Naive thymus-derived CD8-positive, alpha-beta T cell (primary cell): ENCODE measurements at regions of chr11 and their contacts with region 1.

Region 1: GRCh38 chr11:13923716-13924650 is 38.5 kb upstream of the SPON1 start:
- DNase-seq: peak in 7 of 10 donors; percentile 2 to 67 (median 22)
- ATAC-seq: peak; percentile 96 to 97
- H3K4me3 Mint-ChIP-seq: peak overlapping the region; percentile 69 to 88 (median 86)
- H3K27ac Mint-ChIP-seq: peak overlapping the region; percentile 94 to 100 (median 98)
- H3K4me1 Mint-ChIP-seq: peaks cover 39 to 57% (median 50%) of the 10 kb centered on the region in 4 donors
- H3K27me3 Mint-ChIP-seq: no peaks in the 10 kb centered on the region

Region 2: GRCh38 chr11:13781148-13781547 is 142.8 kb before region 1 on chr11:
- POLR2A ChIA-PET with region 1: no interaction called
- DNase-seq: no peak
- ATAC-seq: no peak
- H3K4me3 Mint-ChIP-seq: no peak overlapping the region
- H3K27ac Mint-ChIP-seq: no peak overlapping the region
- H3K4me1 Mint-ChIP-seq: peaks cover 0 to 4% (median 1%) of the 10 kb centered on the region in 4 donors
- H3K27me3 Mint-ChIP-seq: no peaks in the 10 kb centered on the region

Region 3: GRCh38 chr11:13868710-13869397 is 55.1 kb before region 1 on chr11:
- POLR2A ChIA-PET with region 1: interaction called, 18 read pairs
- DNase-seq: peak in 8 of 10 donors; percentile 45 to 90 (median 72)
- ATAC-seq: peak; percentile 94 to 95
- H3K4me3 Mint-ChIP-seq: peak overlapping the region in 9 of 10 donors; percentile 0 to 62 (median 37)
- H3K27ac Mint-ChIP-seq: peak overlapping the region; percentile 89 to 98 (median 94)
- H3K4me1 Mint-ChIP-seq: peaks cover 19 to 49% (median 35%) of the 10 kb centered on the region in 4 donors
- H3K27me3 Mint-ChIP-seq: no peaks in the 10 kb centered on the region